Naive thymus-derived CD4-positive, alpha-beta T cell (primary cell): ENCODE measurements at regions of chr12 and their contacts with region 1.

Region 1: GRCh38 chr12:69570545-69571399 is 14.5 kb upstream of the CCT2 start:
- DNase-seq: peak in 8 of 9 donors; percentile 31 to 70 (median 58)
- ATAC-seq: peak; percentile 88
- H3K4me3 ChIP-seq: no peak overlapping the region
- H3K4me3 Mint-ChIP-seq: no peak overlapping the region
- H3K27ac ChIP-seq: peak overlapping the region; percentile 56
- H3K27ac Mint-ChIP-seq: no peak overlapping the region
- H3K4me1 ChIP-seq: no peaks in the 10 kb centered on the region
- H3K4me1 Mint-ChIP-seq: peaks cover 0 to 16% (median 0%) of the 10 kb centered on the region in 7 donors
- H3K27me3 ChIP-seq: no peaks in the 10 kb centered on the region
- H3K27me3 Mint-ChIP-seq: no peaks in the 10 kb centered on the region

Region 2: GRCh38 chr12:68831272-68831671 is 739.5 kb before region 1 on chr12:
- CTCF ChIA-PET with region 1: no interaction called
- POLR2A ChIA-PET with region 1: no interaction called
- intact Hi-C with region 1: loop called in 1 of 2 experiments (anchors 10 kb)
- DNase-seq: no peak
- ATAC-seq: no peak
- H3K4me3 ChIP-seq: no peak overlapping the region
- H3K4me3 Mint-ChIP-seq: no peak overlapping the region
- H3K27ac ChIP-seq: no peak overlapping the region
- H3K27ac Mint-ChIP-seq: peak overlapping the region in 1 of 9 donors; percentile 62
- H3K4me1 ChIP-seq: no peaks in the 10 kb centered on the region
- H3K4me1 Mint-ChIP-seq: peaks cover 8 to 25% (median 20%) of the 10 kb centered on the region in 7 donors
- H3K27me3 ChIP-seq: no peaks in the 10 kb centered on the region
- H3K27me3 Mint-ChIP-seq: no peaks in the 10 kb centered on the region

Region 3: GRCh38 chr12:69290545-69291277 is 280.1 kb before region 1 on chr12:
- CTCF ChIA-PET with region 1: interaction called, 76 read pairs
- POLR2A ChIA-PET with region 1: no interaction called
- intact Hi-C with region 1: loop called (anchors 1 kb)
- DNase-seq: peak; percentile 57 to 82 (median 75)
- ATAC-seq: peak; percentile 100
- H3K4me3 ChIP-seq: no peak overlapping the region
- H3K4me3 Mint-ChIP-seq: peak overlapping the region in 2 of 10 donors; percentile 14 to 37
- H3K27ac ChIP-seq: no peak overlapping the region
- H3K27ac Mint-ChIP-seq: peak overlapping the region in 1 of 9 donors; percentile 59
- H3K4me1 ChIP-seq: peaks cover 8% of the 10 kb centered on the region in 2 donors
- H3K4me1 Mint-ChIP-seq: peaks cover 6 to 36% (median 22%) of the 10 kb centered on the region in 7 donors
- H3K27me3 ChIP-seq: no peaks in the 10 kb centered on the region
- H3K27me3 Mint-ChIP-seq: peaks cover 0 to 49% (median 18%) of the 10 kb centered on the region in 5 donors

Region 4: GRCh38 chr12:69359531-69360347 is 211.0 kb before region 1 on chr12 and contains the start of gene YEATS4:
- CTCF ChIA-PET with region 1: interaction called, 42 read pairs
- POLR2A ChIA-PET with region 1: interaction called, 3 read pairs
- intact Hi-C with region 1: loop called (anchors 1 kb)
- DNase-seq: peak; percentile 73 to 93 (median 84)
- ATAC-seq: peak; percentile 86
- H3K4me3 ChIP-seq: peak within 1 kb of the TSS; percentile 76
- H3K4me3 Mint-ChIP-seq: peak within 1 kb of the TSS; percentile 82 to 93 (median 89)
- H3K27ac ChIP-seq: peak within 1 kb of the TSS; percentile 93
- H3K27ac Mint-ChIP-seq: peak within 1 kb of the TSS; percentile 80 to 96 (median 91)
- H3K4me1 ChIP-seq: peaks cover 5 to 6% of the 10 kb centered on the region in 2 donors
- H3K4me1 Mint-ChIP-seq: peaks cover 11 to 32% (median 25%) of the 10 kb centered on the region in 7 donors
- H3K27me3 ChIP-seq: no peaks in the 10 kb centered on the region
- H3K27me3 Mint-ChIP-seq: peaks cover 0 to 3% (median 0%) of the 10 kb centered on the region in 5 donors
- total RNA-seq, gene YEATS4: 16.5 to 34.9 (median 21.4) TPM

Region 5: GRCh38 chr12:69388371-69388770 is 182.4 kb before region 1 on chr12:
- CTCF ChIA-PET with region 1: no interaction called
- POLR2A ChIA-PET with region 1: interaction called, 3 read pairs
- intact Hi-C with region 1: loop called (anchors 1 kb)
- DNase-seq: peak in 4 of 9 donors; percentile 0 to 7 (median 2)
- ATAC-seq: no peak
- H3K4me3 ChIP-seq: no peak overlapping the region
- H3K4me3 Mint-ChIP-seq: no peak overlapping the region
- H3K27ac ChIP-seq: no peak overlapping the region
- H3K27ac Mint-ChIP-seq: no peak overlapping the region
- H3K4me1 ChIP-seq: no peaks in the 10 kb centered on the region
- H3K4me1 Mint-ChIP-seq: peaks cover 0 to 8% (median 4%) of the 10 kb centered on the region in 7 donors
- H3K27me3 ChIP-seq: no peaks in the 10 kb centered on the region
- H3K27me3 Mint-ChIP-seq: no peaks in the 10 kb centered on the region

Region 6: GRCh38 chr12:69415471-69416275 is 155.1 kb before region 1 on chr12:
- CTCF ChIA-PET with region 1: interaction called, 5 read pairs
- POLR2A ChIA-PET with region 1: no interaction called
- intact Hi-C with region 1: loop called (anchors 1 kb)
- DNase-seq: peak in 4 of 9 donors; percentile 0 to 13 (median 2)
- ATAC-seq: no peak
- H3K4me3 ChIP-seq: no peak overlapping the region
- H3K4me3 Mint-ChIP-seq: no peak overlapping the region
- H3K27ac ChIP-seq: no peak overlapping the region
- H3K27ac Mint-ChIP-seq: peak overlapping the region in 3 of 9 donors; percentile 8 to 65 (median 11)
- H3K4me1 ChIP-seq: no peaks in the 10 kb centered on the region
- H3K4me1 Mint-ChIP-seq: no peaks in the 10 kb centered on the region
- H3K27me3 ChIP-seq: no peaks in the 10 kb centered on the region
- H3K27me3 Mint-ChIP-seq: no peaks in the 10 kb centered on the region

Region 7: GRCh38 chr12:69435644-69436043 is 135.1 kb before region 1 on chr12:
- CTCF ChIA-PET with region 1: no interaction called
- POLR2A ChIA-PET with region 1: no interaction called
- intact Hi-C with region 1: no loop called
- DNase-seq: no peak
- ATAC-seq: no peak
- H3K4me3 ChIP-seq: no peak overlapping the region
- H3K4me3 Mint-ChIP-seq: no peak overlapping the region
- H3K27ac ChIP-seq: no peak overlapping the region
- H3K27ac Mint-ChIP-seq: peak overlapping the region in 1 of 9 donors; percentile 58
- H3K4me1 ChIP-seq: no peaks in the 10 kb centered on the region
- H3K4me1 Mint-ChIP-seq: no peaks in the 10 kb centered on the region
- H3K27me3 ChIP-seq: no peaks in the 10 kb centered on the region
- H3K27me3 Mint-ChIP-seq: peaks cover 0 to 2% (median 0%) of the 10 kb centered on the region in 5 donors

Region 8: DNA sequence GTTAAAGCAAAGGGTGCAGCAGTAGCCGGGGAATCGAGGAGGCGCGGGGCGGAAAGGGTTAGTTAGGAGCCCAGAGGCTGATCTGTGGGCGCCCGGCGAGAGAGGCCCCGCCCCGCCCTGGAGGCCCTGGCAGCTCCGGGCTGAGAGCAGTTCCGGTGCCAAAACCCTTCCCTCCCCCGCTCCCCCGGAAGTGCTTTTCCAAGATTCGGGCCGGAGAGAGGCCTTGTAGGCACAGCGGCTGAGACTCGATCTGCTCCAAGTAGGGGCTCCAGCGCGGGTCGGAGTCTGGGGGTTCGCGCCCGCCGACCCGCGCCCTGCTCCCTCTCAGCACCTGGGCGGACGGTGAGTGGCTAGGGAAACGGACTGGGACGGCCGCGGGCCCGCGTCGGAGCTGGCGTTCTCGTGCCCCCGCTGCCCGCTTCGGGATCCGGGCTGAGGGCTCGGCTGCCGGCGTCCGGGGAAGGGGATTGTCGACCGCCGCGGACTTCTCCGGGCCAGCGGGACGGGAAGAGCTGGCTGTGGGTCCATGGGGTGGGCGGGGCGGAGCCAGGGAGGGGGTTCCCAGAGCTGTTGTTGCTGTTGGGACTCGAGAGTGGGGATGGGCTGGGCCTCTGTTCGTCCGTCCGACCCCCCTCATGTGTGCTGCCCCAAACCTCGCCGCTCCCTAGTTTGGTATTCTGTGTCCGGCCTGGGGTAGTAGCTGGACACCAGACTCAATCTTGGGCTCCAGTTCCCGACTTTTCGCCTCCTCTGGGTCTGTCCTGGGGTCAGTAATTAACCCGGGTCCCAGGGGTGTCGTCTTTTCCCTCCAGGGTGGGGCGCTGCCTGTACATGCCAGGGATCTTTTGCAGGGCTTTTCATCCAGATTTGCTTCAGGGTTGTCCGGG is 100.3 kb before region 1 on chr12 and contains the start of gene FRS2:
- CTCF ChIA-PET with region 1: no interaction called
- POLR2A ChIA-PET with region 1: no interaction called
- intact Hi-C with region 1: loop called (anchors 1 to 5 kb)
- DNase-seq: peak; percentile 66 to 87 (median 81)
- ATAC-seq: peak; percentile 99
- H3K4me3 ChIP-seq: peak within 1 kb of the TSS; percentile 80
- H3K4me3 Mint-ChIP-seq: peak within 1 kb of the TSS; percentile 91 to 100 (median 96)
- H3K27ac ChIP-seq: peak within 1 kb of the TSS; percentile 94
- H3K27ac Mint-ChIP-seq: peak within 1 kb of the TSS; percentile 91 to 99 (median 97)
- H3K4me1 ChIP-seq: peaks cover 11 to 12% of the 10 kb centered on the region in 2 donors
- H3K4me1 Mint-ChIP-seq: peaks cover 41 to 60% (median 51%) of the 10 kb centered on the region in 7 donors
- H3K27me3 ChIP-seq: no peaks in the 10 kb centered on the region
- H3K27me3 Mint-ChIP-seq: no peaks in the 10 kb centered on the region
- total RNA-seq, gene FRS2: 17.5 to 30.1 (median 24.0) TPM